PC-9 (cell line): ENCODE measurements at regions of chr2 and their contacts with region 1.

Region 1: GRCh38 chr2:212147921-212148513 is 390.6 kb downstream of the ERBB4 start:
- DNase-seq: no peak
- H3K4me3 ChIP-seq: no peak overlapping the region
- H3K27ac ChIP-seq: no peak overlapping the region
- H3K4me1 ChIP-seq: no peaks in the 10 kb centered on the region
- H3K27me3 ChIP-seq: no peaks in the 10 kb centered on the region
- CTCF ChIP-seq: peak; percentile 64

Region 2: DNA sequence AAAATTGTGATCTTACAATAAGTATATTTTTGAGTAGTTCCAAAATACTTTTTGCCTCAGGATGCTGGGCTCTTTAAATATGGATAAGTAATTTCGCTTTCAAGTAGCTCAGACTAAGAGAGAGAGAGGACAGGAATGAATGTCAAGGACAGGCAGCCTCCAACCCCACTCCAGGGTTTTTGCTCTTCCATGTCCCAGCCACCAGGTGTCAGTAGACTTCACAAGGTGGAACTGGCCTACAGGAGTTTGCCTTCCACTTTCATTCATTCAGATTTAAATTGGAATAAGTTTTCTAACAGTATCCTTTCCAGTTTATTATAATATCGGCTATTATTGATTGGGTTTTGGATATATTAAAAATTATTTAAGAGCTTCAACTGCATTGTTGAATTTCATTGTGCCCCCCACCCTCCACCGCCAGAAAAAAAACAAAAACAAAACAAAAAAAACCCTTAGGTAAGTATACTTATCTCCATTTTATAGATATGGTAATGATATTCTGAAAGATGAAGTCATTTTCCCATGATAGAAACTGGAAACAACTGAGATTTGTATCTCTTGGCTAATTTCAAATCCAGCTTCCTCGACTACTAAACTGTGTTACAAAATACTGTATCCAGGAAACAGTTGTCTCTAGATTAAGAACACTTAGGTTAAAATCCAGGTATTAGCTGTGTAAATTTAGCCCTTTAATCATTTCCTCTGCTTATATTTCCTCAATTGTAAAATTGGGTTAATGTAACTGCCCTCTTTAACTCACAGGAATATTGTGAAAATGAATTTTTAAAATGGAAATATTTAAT is 402.5 kb before region 1 on chr2:
- CTCF ChIA-PET with region 1: no interaction called
- POLR2A ChIA-PET with region 1: no interaction called
- intact Hi-C with region 1: loop called (anchors 5 kb)
- DNase-seq: peak in 1 of 2 experiments; percentile 26
- H3K4me3 ChIP-seq: no peak overlapping the region
- H3K27ac ChIP-seq: no peak overlapping the region
- H3K4me1 ChIP-seq: no peaks in the 10 kb centered on the region
- H3K27me3 ChIP-seq: no peaks in the 10 kb centered on the region
- CTCF ChIP-seq: peak; percentile 79